ENCODE measurements at regions of chr1 and their contacts with region 1.

Region 1: DNA sequence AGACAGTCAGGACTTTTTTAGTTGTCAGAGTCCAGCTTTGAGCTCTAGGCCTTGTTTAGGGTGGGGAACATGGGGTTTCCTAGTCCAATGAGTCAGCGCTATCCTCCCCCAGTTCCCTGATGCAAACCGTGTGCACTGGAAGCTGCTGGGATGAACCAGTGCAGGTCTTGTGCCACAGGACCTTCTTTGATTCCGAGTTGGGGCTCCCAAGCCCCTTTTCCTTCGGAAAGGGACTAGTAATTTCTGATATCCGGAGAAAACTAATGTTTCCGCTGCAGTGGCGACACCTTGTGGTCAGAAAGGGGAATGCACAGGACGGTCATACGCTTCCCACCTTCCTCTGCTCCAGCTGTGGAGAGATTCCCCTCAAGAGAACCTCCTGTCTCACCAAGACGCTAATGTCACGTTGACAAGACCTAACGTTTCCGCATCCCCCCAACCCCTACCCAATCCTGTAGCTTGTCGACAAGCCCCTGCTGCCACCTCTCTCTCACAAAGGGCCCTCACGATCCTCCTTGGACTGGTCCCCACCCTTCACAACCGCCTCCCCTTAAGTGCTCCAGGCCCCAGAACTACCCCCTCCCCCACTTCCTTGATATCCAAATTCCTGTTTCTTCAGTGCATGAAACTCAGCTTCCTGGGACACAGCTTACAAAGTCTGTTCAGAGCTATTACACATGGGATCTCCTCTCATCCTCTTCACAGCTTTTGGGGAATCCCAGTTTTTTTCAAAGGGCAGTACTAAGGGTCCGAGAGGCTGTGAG is 30.9 kb downstream of the GPA33 start:
- DNase-seq: peak; percentile 52 to 74 (median 63)
- ATAC-seq: peak in 3 of 4 donors; percentile 47 to 66 (median 62)
- H3K4me3 ChIP-seq: peak overlapping the region in 4 of 12 donors; percentile 11 to 41 (median 22)
- H3K27ac ChIP-seq: no peak overlapping the region
- H3K4me1 ChIP-seq: peaks cover 0 to 8% (median 3%) of the 10 kb centered on the region in 12 donors
- H3K27me3 ChIP-seq: peaks cover 0 to 8% (median 0%) of the 10 kb centered on the region in 9 donors
- CTCF ChIP-seq: peak; percentile 91 to 98 (median 94)
- POLR2A ChIP-seq: no peak

Region 2: DNA sequence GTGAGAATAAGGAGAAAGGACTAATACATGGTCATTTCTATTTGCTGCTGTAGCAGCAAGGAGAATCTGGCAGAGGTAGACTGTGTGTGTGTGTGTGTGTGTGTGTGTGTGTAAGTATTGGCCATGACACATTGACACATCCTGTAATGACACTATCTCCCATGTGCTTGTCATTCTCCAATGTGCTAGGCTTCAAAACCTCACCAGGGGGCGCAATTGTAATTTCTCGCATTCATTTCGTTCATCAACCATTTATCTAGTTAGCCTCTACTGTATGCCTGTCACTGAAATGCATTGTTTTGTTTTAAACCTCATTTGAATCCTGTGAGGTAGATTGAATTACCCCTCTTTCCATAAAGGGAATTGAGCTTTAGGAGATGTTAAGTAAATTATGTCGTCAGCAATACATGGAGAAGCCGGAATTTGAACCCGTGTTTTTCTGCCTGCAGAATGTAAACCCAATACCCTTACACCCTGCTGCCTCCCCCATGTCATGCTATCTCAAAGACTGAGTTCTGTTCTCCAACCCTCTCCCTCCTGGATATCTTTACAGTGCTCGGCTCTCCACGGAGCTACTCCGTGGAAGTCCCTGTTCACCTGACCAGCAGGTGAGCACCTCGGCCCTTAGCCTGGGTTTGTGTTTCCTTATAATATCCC is 1131.0 kb before region 1 on chr1:
- intact Hi-C with region 1: loop called in 1 of 10 experiments (anchors 10 kb)
- DNase-seq: peak in 1 of 5 donors; percentile 38
- ATAC-seq: peak in 2 of 4 donors; percentile 11 to 47
- H3K4me3 ChIP-seq: no peak overlapping the region
- H3K27ac ChIP-seq: no peak overlapping the region
- H3K4me1 ChIP-seq: no peaks in the 10 kb centered on the region
- H3K27me3 ChIP-seq: peaks cover 0 to 4% (median 0%) of the 10 kb centered on the region in 9 donors
- CTCF ChIP-seq: peak; percentile 39 to 74 (median 62)
- POLR2A ChIP-seq: no peak

Region 3: GRCh38 chr1:166884040-166884642 is 175.1 kb before region 1 on chr1:
- intact Hi-C with region 1: loop called in 7 of 10 experiments (anchors 1 to 5 kb)
- DNase-seq: peak; percentile 29 to 73 (median 41)
- ATAC-seq: peak; percentile 69 to 92 (median 90)
- H3K4me3 ChIP-seq: peak overlapping the region in 2 of 12 donors; percentile 7 to 14
- H3K27ac ChIP-seq: no peak overlapping the region
- H3K4me1 ChIP-seq: peaks cover 0 to 7% (median 0%) of the 10 kb centered on the region in 12 donors
- H3K27me3 ChIP-seq: peaks cover 5 to 29% (median 13%) of the 10 kb centered on the region in 9 donors
- CTCF ChIP-seq: peak; percentile 36 to 75 (median 63)
- POLR2A ChIP-seq: no peak

Region 4: GRCh38 chr1:166889776-166890175 is 169.5 kb before region 1 on chr1:
- intact Hi-C with region 1: loop called in 8 of 10 experiments (anchors 1 to 5 kb)
- DNase-seq: no peak
- ATAC-seq: no peak
- H3K4me3 ChIP-seq: no peak overlapping the region
- H3K27ac ChIP-seq: no peak overlapping the region
- H3K4me1 ChIP-seq: no peaks in the 10 kb centered on the region
- H3K27me3 ChIP-seq: peaks cover 0 to 18% (median 2%) of the 10 kb centered on the region in 9 donors
- CTCF ChIP-seq: no peak
- POLR2A ChIP-seq: no peak

Region 5: GRCh38 chr1:166902271-166902670 is 157.0 kb before region 1 on chr1:
- intact Hi-C with region 1: loop called in 1 of 10 experiments (anchors 5 kb)
- DNase-seq: no peak
- ATAC-seq: peak in 3 of 4 donors; percentile 63 to 76 (median 69)
- H3K4me3 ChIP-seq: no peak overlapping the region
- H3K27ac ChIP-seq: peak overlapping the region in 1 of 12 donors; percentile 46
- H3K4me1 ChIP-seq: peaks cover 0 to 15% (median 0%) of the 10 kb centered on the region in 12 donors
- H3K27me3 ChIP-seq: peaks cover 0 to 2% (median 0%) of the 10 kb centered on the region in 9 donors
- CTCF ChIP-seq: no peak
- POLR2A ChIP-seq: no peak

Region 6: GRCh38 chr1:166910396-166910994 is 148.7 kb before region 1 on chr1:
- intact Hi-C with region 1: loop called (anchors 1 to 5 kb)
- DNase-seq: peak in 4 of 5 donors; percentile 51 to 58 (median 56)
- ATAC-seq: peak; percentile 84 to 94 (median 92)
- H3K4me3 ChIP-seq: no peak overlapping the region
- H3K27ac ChIP-seq: no peak overlapping the region
- H3K4me1 ChIP-seq: no peaks in the 10 kb centered on the region
- H3K27me3 ChIP-seq: no peaks in the 10 kb centered on the region
- CTCF ChIP-seq: peak; percentile 39 to 82 (median 68)
- POLR2A ChIP-seq: no peak

Region 7: GRCh38 chr1:166975361-166976129 is 83.7 kb before region 1 on chr1 and contains the start of gene ILDR2:
- intact Hi-C with region 1: loop called in 2 of 10 experiments (anchors 5 to 10 kb)
- DNase-seq: peak; percentile 45 to 72 (median 58)
- ATAC-seq: peak; percentile 26 to 91 (median 80)
- H3K4me3 ChIP-seq: peak within 1 kb of the TSS; percentile 55 to 90 (median 70)
- H3K27ac ChIP-seq: peak within 1 kb of the TSS in 11 of 12 donors; percentile 50 to 87 (median 71)
- H3K4me1 ChIP-seq: peaks cover 0 to 19% (median 2%) of the 10 kb centered on the region in 12 donors
- H3K27me3 ChIP-seq: peaks cover 0 to 51% (median 7%) of the 10 kb centered on the region in 9 donors
- CTCF ChIP-seq: peak in 3 of 12 donors; percentile 21 to 34 (median 24)
- POLR2A ChIP-seq: no peak
- total RNA-seq, gene ILDR2: 3.2 to 12.4 (median 6.3) TPM

Region 8: DNA sequence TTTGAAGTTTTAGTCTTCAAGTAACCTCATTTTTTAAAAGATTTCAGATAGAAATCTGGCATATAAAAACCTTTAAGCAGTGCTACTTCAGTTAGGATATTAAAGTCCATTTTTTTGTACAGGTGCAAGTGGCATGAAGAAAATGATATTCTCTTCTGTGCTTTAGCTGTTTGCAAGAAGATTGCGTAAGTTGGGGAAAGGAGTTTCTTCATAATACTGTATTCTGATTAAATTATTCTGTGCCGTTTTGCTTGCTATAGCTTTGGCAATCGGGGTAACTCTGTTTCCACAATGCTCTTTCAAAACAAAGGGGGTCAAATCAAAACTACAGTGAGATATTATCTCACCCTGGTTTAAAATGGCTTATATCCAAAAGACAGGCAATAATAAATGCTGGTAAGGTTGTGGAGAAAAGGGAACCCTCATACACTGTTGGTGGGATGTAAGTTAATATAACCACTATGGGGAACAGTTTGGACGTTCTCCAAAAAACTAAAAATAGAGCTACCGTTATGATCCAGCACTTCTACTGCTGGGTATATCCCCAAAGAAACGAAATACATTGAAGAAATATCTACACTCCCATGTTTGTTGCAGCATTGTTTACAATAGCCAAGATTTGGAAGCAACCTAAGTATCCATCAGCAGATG is 43.0 kb before region 1 on chr1:
- intact Hi-C with region 1: no loop called
- DNase-seq: no peak
- ATAC-seq: no peak
- H3K4me3 ChIP-seq: no peak overlapping the region
- H3K27ac ChIP-seq: no peak overlapping the region
- H3K4me1 ChIP-seq: no peaks in the 10 kb centered on the region
- H3K27me3 ChIP-seq: no peaks in the 10 kb centered on the region
- CTCF ChIP-seq: no peak
- POLR2A ChIP-seq: no peak